ENCODE measurements at regions of chr1 and their contacts with region 1.

Region 1: GRCh38 chr1:155591770-155592169 is 18.2 kb upstream of the MSTO1 start:
- DNase-seq: peak; percentile 33
- H3K4me3 ChIP-seq: no peak overlapping the region
- H3K27ac ChIP-seq: no peak overlapping the region
- H3K4me1 ChIP-seq: no peaks in the 10 kb centered on the region
- H3K27me3 ChIP-seq: no peaks in the 10 kb centered on the region
- CTCF ChIP-seq: peak; percentile 31 to 64 (median 56)
- POLR2A ChIP-seq: no peak

Region 2: DNA sequence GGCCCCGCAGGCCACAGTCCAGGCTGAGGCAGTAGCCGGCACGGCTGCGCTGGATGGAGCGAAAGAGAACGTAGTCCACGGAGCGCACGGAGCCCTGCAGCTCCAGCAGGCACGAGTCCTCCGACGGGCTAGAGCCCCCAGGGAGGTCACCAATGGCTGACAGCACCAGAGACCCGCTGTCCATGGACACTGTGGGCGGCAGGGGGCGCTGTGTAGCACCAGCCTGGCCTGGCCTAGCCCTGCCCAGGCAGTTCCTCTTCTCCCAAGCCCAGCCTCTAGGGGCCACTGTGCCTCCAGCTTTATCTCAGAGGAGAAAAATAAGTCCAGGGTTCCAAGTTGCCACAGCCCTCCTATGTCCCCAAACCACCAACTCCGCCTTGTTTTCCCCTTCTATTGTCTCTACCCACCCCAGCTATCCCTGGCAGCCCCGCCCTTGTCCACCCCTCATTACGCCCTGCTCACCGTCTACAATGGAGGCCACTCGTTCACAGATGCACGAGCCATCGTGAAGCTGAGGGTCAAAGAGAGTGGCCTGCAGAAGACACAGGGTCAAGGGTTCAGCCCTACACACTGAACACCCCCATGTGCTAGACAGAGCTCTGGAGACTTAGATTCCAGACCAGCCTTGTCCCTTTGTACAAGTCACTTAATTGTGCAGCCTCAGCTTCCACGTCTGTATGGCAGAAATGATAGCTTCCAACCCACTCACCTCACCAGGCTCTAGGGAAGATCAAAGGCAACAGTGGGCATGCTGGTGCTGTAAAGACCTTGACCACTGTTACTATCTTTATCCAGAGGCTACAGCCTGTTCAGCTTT is 340.9 kb before region 1 on chr1:
- intact Hi-C with region 1: loop called (anchors 10 kb)
- DNase-seq: peak; percentile 94
- H3K4me3 ChIP-seq: peak overlapping the region; percentile 5 to 47
- H3K27ac ChIP-seq: peak overlapping the region in 1 of 2 donors; percentile 32
- H3K4me1 ChIP-seq: peaks cover 36% of the 10 kb centered on the region
- H3K27me3 ChIP-seq: no peaks in the 10 kb centered on the region
- CTCF ChIP-seq: peak; percentile 95 to 99 (median 98)
- POLR2A ChIP-seq: no peak

Region 3: DNA sequence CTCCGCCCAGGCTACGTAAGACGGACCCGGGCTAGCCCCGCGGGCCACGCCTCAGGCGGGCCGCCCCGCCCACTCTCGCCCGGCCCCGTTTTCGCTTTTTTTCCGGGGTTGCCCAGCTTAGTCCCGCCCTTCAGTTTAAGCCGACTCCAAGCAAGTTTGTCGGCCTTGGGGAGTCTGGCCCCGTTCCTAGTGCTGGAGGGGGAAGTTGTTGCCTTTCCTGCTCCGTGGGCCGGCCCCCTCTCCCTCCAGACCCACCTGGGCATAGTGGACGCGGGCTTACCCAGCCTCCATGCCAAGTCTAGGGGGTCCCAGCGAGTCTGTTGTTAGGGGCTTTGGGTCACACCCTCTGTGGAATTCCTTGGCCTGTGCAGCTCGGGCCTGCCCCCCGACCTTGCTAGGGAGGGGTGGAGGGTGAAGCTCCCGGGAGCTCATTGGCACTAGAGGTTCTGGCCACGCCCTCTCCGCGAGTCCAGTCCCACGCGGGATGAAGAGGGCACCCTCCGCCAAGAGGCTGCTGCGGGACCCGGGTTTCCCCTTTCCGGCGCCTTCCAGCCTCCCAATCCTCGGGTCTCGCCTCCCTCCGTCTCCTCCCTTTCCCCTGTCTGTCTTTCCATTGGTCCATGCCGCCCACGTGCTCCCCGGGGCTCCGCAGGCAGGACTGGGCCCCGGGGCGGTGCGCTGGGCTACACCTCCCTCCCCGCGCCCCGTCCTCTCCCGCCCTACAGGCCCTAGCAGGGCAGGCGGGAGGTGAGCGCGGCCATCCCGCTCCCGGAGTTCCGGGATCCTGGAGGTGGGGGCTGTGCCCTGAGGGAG is 267.8 kb before region 1 on chr1:
- intact Hi-C with region 1: loop called (anchors 10 kb)
- DNase-seq: peak; percentile 95
- H3K4me3 ChIP-seq: peak overlapping the region; percentile 57 to 75
- H3K27ac ChIP-seq: peak overlapping the region; percentile 90 to 95
- H3K4me1 ChIP-seq: peaks cover 23% of the 10 kb centered on the region
- H3K27me3 ChIP-seq: no peaks in the 10 kb centered on the region
- CTCF ChIP-seq: no peak
- POLR2A ChIP-seq: no peak

Region 4: DNA sequence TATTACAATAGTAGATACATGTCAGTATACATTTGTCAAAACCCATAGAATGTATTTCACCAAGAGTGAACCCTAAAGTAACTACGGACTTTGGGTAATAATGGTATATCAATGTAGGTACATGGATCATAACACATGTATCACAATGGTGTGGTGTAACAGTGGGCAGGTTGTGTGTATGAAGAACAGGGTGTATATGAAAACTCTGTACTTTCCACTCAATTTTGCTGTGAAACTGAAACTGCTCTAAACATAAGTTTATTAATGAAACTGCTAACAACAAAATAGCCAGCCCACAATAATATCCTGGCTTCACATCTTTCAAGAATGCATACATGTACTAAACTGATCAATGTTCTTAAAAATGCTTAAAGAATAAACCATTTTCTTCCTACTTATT is 180.8 kb before region 1 on chr1:
- intact Hi-C with region 1: no loop called
- DNase-seq: no peak
- H3K4me3 ChIP-seq: no peak overlapping the region
- H3K27ac ChIP-seq: no peak overlapping the region
- H3K4me1 ChIP-seq: no peaks in the 10 kb centered on the region
- H3K27me3 ChIP-seq: no peaks in the 10 kb centered on the region
- CTCF ChIP-seq: no peak
- POLR2A ChIP-seq: no peak

Region 5: GRCh38 chr1:155706091-155706619 is 114.4 kb after region 1 on chr1:
- intact Hi-C with region 1: no loop called
- DNase-seq: no peak
- H3K4me3 ChIP-seq: no peak overlapping the region
- H3K27ac ChIP-seq: no peak overlapping the region
- H3K4me1 ChIP-seq: peaks cover 3% of the 10 kb centered on the region
- H3K27me3 ChIP-seq: no peaks in the 10 kb centered on the region
- CTCF ChIP-seq: no peak
- POLR2A ChIP-seq: no peak

Measured in testis (tissue), 5 donors.